IMR-90 (cell line): ENCODE measurements at regions of chr2 and their contacts with region 1.

Region 1: DNA sequence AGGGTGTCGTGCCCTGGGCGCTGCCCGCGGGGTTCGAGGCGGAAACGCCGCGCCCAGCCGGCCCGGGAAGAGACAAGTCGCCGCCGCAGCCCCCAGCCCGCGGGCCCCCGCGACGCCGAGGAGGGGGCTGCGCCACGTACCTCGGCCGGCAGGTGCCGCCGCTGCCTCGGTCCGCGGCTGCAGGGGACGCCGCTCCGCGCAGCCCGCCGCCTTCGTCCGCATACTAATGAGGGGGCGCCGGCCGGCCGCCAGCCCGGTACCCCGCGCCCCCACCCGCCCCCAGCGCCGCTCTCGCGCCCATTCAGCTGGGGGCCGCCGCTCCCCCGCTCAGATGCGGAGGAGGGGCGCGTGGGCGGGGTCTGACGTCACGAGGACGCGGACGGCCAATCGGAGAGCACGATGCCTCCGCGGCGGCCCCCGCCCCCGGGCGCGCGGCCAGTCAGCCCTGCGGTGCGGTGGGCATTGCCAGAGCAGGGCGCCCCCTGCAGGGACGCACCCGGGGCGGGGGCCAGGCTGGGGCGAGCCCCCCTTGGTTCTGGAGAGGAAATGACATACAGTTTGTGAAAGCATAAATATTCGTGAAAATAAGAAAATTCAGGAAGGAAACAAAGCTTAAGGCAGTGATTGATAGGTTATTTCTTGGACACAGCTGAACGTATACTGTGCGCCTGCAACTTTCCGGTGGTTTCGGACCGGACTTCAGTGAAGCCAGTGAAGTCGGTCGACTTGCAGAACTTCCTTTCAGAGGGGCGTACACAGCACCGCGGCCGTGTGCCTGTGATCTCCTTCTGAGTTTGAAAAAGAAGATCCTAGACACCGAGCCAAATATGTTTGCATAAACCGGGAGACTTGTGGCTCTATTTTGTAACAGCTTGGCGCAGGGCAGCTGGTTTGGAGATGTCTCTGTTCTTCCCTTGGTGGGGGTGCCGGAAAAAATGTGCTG is at the start of gene ST3GAL5:
- DNase-seq: peak; percentile 75
- ATAC-seq: peak; percentile 75
- H3K4me3 ChIP-seq: peak within 1 kb of the TSS; percentile 55
- H3K27ac ChIP-seq: peak within 1 kb of the TSS; percentile 47
- H3K4me1 ChIP-seq: peaks cover 16% of the 10 kb centered on the region
- H3K27me3 ChIP-seq: no peaks in the 10 kb centered on the region
- CTCF ChIP-seq: peak; percentile 78
- POLR2A ChIP-seq: no peak
- RAD21 ChIP-seq: peak; percentile 52
- total RNA-seq, gene ST3GAL5: 16.8 and 18.6 TPM in 2 replicates

Region 2: DNA sequence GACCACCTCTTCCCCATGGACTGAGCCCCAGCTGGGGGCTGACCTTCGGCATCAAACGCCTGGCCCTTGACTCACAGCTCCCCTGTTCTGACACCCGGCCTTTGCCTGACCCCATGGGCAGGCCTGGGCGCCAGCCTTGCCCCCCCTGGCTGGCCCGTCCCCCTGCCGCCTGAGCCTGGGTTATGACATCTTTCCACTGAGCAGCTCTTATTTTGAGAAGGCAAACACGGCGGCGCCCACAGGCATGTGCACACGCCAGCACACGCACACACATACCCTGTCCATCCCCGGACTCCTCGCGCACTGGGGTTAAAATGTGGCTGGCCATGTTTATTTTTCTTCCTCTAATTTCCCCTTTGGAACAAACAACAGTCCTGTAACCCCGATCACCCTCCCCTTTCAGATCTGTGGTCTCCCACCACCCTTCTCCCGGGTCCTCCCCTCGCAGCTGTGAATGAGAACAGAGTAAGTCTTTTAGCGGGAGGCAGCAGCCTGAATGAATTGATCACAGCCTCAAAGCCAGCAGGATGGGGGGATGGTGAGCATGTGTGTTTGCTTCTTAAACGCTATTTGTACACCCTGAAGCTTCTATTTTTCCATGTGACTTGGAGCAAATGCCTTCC is 147.0 kb before region 1 on chr2:
- CTCF ChIA-PET with region 1: no interaction called
- POLR2A ChIA-PET with region 1: no interaction called
- dilution Hi-C with region 1: no loop called
- in situ Hi-C with region 1: no loop called
- intact Hi-C with region 1: no loop called
- DNase-seq: peak; percentile 96
- ATAC-seq: peak; percentile 78
- H3K4me3 ChIP-seq: no peak overlapping the region
- H3K27ac ChIP-seq: peak overlapping the region; percentile 90
- H3K4me1 ChIP-seq: peaks cover 46% of the 10 kb centered on the region
- H3K27me3 ChIP-seq: no peaks in the 10 kb centered on the region
- CTCF ChIP-seq: no peak
- POLR2A ChIP-seq: no peak; the same call in 1 of the 2 replicates
- RAD21 ChIP-seq: no peak

Region 3: DNA sequence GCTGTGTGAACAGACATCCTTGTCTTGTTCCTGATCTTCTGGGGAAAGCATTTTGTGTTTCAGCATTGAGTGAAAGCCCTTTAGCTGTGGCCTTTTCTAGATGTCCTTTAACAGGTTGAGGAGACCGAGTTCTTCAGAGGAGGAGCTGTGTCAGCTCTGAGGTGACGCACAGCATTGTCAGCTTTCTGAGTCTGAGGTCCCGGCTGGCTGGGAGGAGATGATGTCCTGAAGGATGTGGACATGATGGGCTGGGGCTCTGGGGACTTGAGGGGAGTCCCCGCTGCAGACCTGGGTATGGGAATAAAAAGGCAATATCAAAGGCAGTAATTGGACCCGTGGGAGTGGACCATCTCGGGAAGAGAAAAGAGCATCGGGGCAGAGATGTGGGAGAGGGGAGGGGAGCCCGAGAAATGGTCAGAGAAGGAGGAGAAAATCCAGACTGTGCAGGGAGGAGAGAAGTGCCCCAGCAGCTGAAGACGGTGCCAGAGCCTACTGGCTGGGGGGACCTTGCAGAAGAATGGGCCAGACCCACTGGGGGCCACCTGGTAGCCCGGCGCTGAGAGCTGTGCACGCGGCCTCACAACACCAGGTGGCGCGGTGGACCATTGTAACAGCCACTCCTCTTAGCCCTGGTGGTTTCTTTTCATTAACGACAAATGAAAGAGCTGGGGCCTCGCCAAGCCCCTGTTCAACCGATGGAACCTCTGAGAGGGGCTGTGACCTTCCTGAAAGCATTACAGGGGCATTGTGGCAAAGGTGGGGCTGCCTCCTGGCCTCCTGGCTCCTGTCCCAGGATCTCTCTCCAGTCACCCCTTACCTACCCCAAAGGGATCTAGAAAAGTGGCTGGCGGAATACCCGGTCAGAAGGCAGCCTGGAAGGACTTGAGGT is 61.7 kb before region 1 on chr2:
- CTCF ChIA-PET with region 1: interaction called, 23 read pairs
- POLR2A ChIA-PET with region 1: interaction called, 4 read pairs
- dilution Hi-C with region 1: no loop called
- in situ Hi-C with region 1: no loop called
- intact Hi-C with region 1: loop called (anchors 1 kb)
- DNase-seq: peak; percentile 49
- ATAC-seq: peak; percentile 100
- H3K4me3 ChIP-seq: no peak overlapping the region
- H3K27ac ChIP-seq: no peak overlapping the region
- H3K4me1 ChIP-seq: no peaks in the 10 kb centered on the region
- H3K27me3 ChIP-seq: peaks cover 9% of the 10 kb centered on the region
- CTCF ChIP-seq: peak; percentile 92
- POLR2A ChIP-seq: 0 out of 2 replicates have a peak, but pooled peaks have one; percentile 36
- RAD21 ChIP-seq: peak; percentile 94

Region 4: GRCh38 chr2:85846411-85846810 is 42.5 kb before region 1 on chr2:
- CTCF ChIA-PET with region 1: no interaction called
- POLR2A ChIA-PET with region 1: no interaction called
- dilution Hi-C with region 1: no loop called
- in situ Hi-C with region 1: no loop called
- intact Hi-C with region 1: loop called (anchors 1 kb)
- DNase-seq: peak; percentile 91
- ATAC-seq: peak; percentile 89
- H3K4me3 ChIP-seq: no peak overlapping the region
- H3K27ac ChIP-seq: no peak overlapping the region
- H3K4me1 ChIP-seq: peaks cover 4% of the 10 kb centered on the region
- H3K27me3 ChIP-seq: no peaks in the 10 kb centered on the region
- CTCF ChIP-seq: no peak
- POLR2A ChIP-seq: no peak
- RAD21 ChIP-seq: no peak

Region 5: GRCh38 chr2:85999061-85999831 is 110.3 kb after region 1 on chr2:
- CTCF ChIA-PET with region 1: no interaction called
- POLR2A ChIA-PET with region 1: no interaction called
- dilution Hi-C with region 1: no loop called
- in situ Hi-C with region 1: no loop called
- intact Hi-C with region 1: loop called (anchors 2 kb)
- DNase-seq: peak; percentile 49
- ATAC-seq: peak; percentile 9
- H3K4me3 ChIP-seq: no peak overlapping the region
- H3K27ac ChIP-seq: peak overlapping the region; percentile 92
- H3K4me1 ChIP-seq: peaks cover 32% of the 10 kb centered on the region
- H3K27me3 ChIP-seq: no peaks in the 10 kb centered on the region
- CTCF ChIP-seq: no peak
- POLR2A ChIP-seq: no peak
- RAD21 ChIP-seq: no peak

Region 6: DNA sequence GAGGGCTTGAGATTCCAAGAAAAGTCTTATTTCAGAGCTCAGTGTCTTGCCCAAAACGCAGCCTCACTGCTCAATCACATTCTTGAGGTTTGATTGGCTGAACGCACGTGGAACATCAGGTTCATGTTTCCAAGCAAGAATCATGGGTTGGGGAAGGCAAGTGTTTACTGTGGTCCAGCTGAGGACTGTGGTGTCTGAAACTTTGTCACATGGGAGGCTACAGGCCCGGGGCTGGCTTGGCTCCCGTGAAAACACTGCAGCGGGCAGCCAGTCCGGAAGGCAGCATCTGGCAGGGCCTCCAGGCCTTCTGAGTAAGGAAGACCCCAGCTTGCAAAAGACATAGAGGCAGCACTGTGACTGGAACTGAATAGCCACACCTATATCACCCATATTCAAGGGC is 132.0 kb after region 1 on chr2:
- CTCF ChIA-PET with region 1: no interaction called
- POLR2A ChIA-PET with region 1: no interaction called
- dilution Hi-C with region 1: no loop called
- in situ Hi-C with region 1: no loop called
- intact Hi-C with region 1: loop called (anchors 5 kb)
- DNase-seq: peak; percentile 70
- ATAC-seq: peak; percentile 86
- H3K4me3 ChIP-seq: no peak overlapping the region
- H3K27ac ChIP-seq: no peak overlapping the region
- H3K4me1 ChIP-seq: peaks cover 7% of the 10 kb centered on the region; the same call in 1 of the 2 replicates
- H3K27me3 ChIP-seq: no peaks in the 10 kb centered on the region
- CTCF ChIP-seq: no peak
- POLR2A ChIP-seq: no peak
- RAD21 ChIP-seq: no peak

Region 7: DNA sequence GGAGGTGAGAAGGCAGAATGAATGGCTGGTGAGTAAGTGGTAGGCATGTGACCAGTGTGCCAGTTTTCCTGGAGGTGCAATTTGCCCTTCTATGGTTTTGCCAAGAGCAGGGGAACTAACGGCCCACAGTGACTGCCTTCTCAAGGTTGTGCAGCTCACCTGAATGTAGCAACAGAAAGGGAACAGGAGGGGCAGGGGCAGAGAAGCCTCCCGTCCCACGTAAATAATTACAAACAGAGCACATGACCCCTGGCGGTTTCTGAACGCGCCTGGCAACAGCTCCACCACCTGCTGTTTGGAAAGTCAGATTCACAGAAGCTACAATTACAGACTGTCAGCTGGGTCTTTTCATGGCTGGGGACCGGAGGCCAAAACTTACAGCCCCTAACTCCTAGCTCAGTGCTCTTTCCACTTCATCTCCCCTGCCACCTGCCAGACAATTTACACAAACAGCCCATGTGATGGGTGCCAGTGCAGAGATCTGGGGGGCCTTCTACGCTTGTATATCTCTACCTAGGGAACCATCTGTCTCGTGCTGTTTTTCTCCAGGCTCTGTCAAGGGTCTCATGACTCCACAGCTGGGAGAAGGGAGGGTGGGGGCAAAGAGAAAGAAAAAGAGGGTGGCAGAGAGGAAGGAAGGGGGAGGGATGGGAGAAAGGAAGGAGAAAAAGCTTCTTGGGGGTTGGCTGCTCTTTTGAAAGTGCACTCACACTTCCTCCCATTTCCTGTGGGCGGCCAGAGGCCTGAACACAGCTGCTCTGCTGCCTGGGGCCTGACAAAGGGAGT is 147.1 kb after region 1 on chr2:
- CTCF ChIA-PET with region 1: interaction called, 5 read pairs
- POLR2A ChIA-PET with region 1: interaction called, 3 read pairs
- dilution Hi-C with region 1: no loop called
- in situ Hi-C with region 1: no loop called
- intact Hi-C with region 1: loop called (anchors 1 kb)
- DNase-seq: peak; percentile 86
- ATAC-seq: peak; percentile 83
- H3K4me3 ChIP-seq: no peak overlapping the region
- H3K27ac ChIP-seq: peak overlapping the region; percentile 83
- H3K4me1 ChIP-seq: peaks cover 29% of the 10 kb centered on the region
- H3K27me3 ChIP-seq: no peaks in the 10 kb centered on the region
- CTCF ChIP-seq: peak; percentile 36
- POLR2A ChIP-seq: no peak
- RAD21 ChIP-seq: peak; percentile 45

Region 8: GRCh38 chr2:86079981-86080911 is 191.3 kb after region 1 on chr2:
- CTCF ChIA-PET with region 1: interaction called, 8 read pairs
- POLR2A ChIA-PET with region 1: no interaction called
- dilution Hi-C with region 1: no loop called
- in situ Hi-C with region 1: no loop called
- intact Hi-C with region 1: loop called (anchors 2 kb)
- DNase-seq: peak; percentile 67
- ATAC-seq: peak; percentile 93
- H3K4me3 ChIP-seq: no peak overlapping the region
- H3K27ac ChIP-seq: no peak overlapping the region
- H3K4me1 ChIP-seq: no peaks in the 10 kb centered on the region
- H3K27me3 ChIP-seq: no peaks in the 10 kb centered on the region
- CTCF ChIP-seq: peak; percentile 75
- POLR2A ChIP-seq: no peak
- RAD21 ChIP-seq: peak; percentile 84